ENCODE measurements at regions of chr3 and their contacts with region 1.

Region 1: DNA sequence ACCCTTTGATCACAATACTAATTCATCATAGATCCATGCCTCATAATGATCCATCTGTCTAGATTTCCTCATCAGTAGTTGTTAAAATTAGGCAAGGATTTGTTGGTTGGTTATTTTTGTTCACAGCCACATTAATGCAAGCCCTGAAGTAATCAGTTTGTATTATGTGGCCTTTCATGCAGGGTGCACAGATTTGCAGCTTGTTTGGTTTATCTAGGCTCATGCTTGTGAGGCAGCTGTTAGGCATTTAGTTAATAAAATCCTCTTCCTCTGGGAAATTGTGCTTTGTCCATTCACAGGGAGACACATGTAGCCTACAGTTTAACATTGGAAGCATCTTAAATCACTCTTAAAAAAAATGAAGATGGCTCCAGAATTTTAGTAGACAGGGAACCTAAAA is 162.8 kb upstream of the ZNF385D start:
- DNase-seq: no peak
- CTCF ChIP-seq: no peak

Region 2: GRCh38 chr3:21901484-21901883 is 12.3 kb before region 1 on chr3:
- CTCF ChIA-PET with region 1: interaction called, 10 read pairs
- POLR2A ChIA-PET with region 1: no interaction called
- DNase-seq: no peak
- CTCF ChIP-seq: no peak

Measured in GM10248 (cell line).